ENCODE measurements at regions of chrX and their contacts with region 1.

Region 1: GRCh38 chrX:70030301-70030767 is 19.4 kb downstream of the AWAT2 start:
- DNase-seq: no peak
- ATAC-seq: peak; percentile 55 to 84 (median 72)
- H3K4me3 ChIP-seq: no peak overlapping the region
- H3K27ac ChIP-seq: no peak overlapping the region
- H3K4me1 ChIP-seq: no peaks in the 10 kb centered on the region
- H3K27me3 ChIP-seq: peaks cover 0 to 35% (median 0%) of the 10 kb centered on the region in 3 donors
- CTCF ChIP-seq: peak; percentile 70

Region 2: GRCh38 chrX:69615779-69616456 is 414.4 kb before region 1 on chrX and contains the start of gene EDA:
- intact Hi-C with region 1: loop called in 1 of 2 experiments (anchors 5 kb)
- DNase-seq: peak; percentile 88 to 93
- ATAC-seq: peak; percentile 95 to 99 (median 98)
- H3K4me3 ChIP-seq: peak within 1 kb of the TSS; percentile 73
- H3K27ac ChIP-seq: peak within 1 kb of the TSS; percentile 30
- H3K4me1 ChIP-seq: no peaks in the 10 kb centered on the region
- H3K27me3 ChIP-seq: peaks cover 0 to 12% (median 0%) of the 10 kb centered on the region in 3 donors
- CTCF ChIP-seq: no peak
- total RNA-seq, gene EDA: 0.49 to 2.5 (median 1.1) TPM